ENCODE measurements at regions of chr20 and their contacts with region 1.

Region 1: DNA sequence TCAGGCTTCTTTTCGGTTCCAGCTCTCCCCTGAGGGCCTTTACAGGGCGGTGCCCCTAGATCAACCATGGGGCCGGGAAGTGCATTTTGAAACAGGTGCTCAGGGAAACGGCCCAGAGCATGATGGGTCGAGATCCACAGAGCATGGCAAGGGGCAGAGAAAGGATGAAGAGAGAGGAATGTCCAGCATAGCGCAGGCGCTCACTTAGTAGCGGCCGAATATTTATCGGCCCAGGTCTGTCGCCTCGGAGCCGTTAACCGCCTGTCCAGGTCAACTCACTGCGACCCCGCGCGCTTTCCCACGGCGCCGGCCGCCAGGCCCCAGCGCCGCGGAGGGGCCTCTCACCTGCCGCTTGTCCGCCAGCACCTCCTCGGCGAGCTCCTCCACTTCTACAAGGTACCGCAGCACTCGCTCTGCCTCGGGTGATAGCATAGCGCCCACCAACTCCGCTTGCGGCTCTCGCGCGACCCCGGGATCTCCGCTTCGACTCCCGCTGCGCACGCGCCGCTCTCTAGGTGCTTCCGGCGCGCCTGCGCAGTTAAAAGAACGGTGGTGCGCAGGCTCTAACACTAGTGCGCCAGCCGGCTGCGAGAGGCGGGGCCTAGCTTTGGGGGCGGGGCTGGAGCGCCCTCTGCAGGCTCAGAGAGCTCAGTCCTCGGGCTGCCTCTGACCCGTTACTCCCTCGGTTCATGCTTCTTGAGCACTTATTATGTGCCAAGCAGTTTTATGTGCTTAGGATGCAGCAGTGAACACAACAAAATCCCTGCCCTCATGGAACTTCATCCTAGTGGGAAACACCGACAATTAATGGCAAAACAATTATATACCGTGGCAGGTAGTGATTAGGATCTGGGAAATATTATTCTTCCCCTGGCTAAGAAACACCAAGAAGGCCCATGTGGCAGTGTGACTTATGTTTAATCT is at the start of gene PDRG1:
- DNase-seq: peak; percentile 90 to 99 (median 95)
- ATAC-seq: peak; percentile 94 to 99 (median 98)
- H3K4me3 ChIP-seq: peak within 1 kb of the TSS; percentile 91 to 95
- H3K4me3 Mint-ChIP-seq: peak within 1 kb of the TSS; percentile 95 to 97 (median 97)
- H3K27ac ChIP-seq: peak within 1 kb of the TSS; percentile 51
- H3K27ac Mint-ChIP-seq: peak within 1 kb of the TSS; percentile 80 to 97
- H3K4me1 ChIP-seq: peaks cover 4 to 23% of the 10 kb centered on the region in 2 experiments
- H3K4me1 Mint-ChIP-seq: peaks cover 31 to 36% (median 34%) of the 10 kb centered on the region in 3 donors
- H3K27me3 ChIP-seq: peaks cover 0 to 17% of the 10 kb centered on the region in 2 experiments
- H3K27me3 Mint-ChIP-seq: peaks cover 6 to 20% of the 10 kb centered on the region in 2 donors
- total RNA-seq, gene PDRG1: 7.5 to 14.5 (median 11.6) TPM

Region 2: GRCh38 chr20:31851240-31851955 is 100.4 kb before region 1 on chr20:
- CTCF ChIA-PET with region 1: interaction called, 4 to 18 read pairs
- POLR2A ChIA-PET with region 1: no interaction called
- DNase-seq: no peak
- ATAC-seq: no peak
- H3K4me3 ChIP-seq: no peak overlapping the region
- H3K4me3 Mint-ChIP-seq: no peak overlapping the region
- H3K27ac ChIP-seq: no peak overlapping the region
- H3K27ac Mint-ChIP-seq: no peak overlapping the region
- H3K4me1 ChIP-seq: peaks cover 0 to 6% of the 10 kb centered on the region in 2 experiments
- H3K4me1 Mint-ChIP-seq: peaks cover 0 to 1% (median 0%) of the 10 kb centered on the region in 3 donors
- H3K27me3 ChIP-seq: peaks cover 0 to 51% of the 10 kb centered on the region in 2 experiments
- H3K27me3 Mint-ChIP-seq: peaks cover 15 to 34% of the 10 kb centered on the region in 2 donors

Measured in T-cell (primary cell).